ENCODE measurements at regions of chr5 and their contacts with region 1.

Region 1: GRCh38 chr5:140806834-140807775 is at the start of gene PCDHA4:
- DNase-seq: peak; percentile 24 to 74
- ATAC-seq: peak; percentile 97 to 98
- H3K4me3 ChIP-seq: peak within 1 kb of the TSS; percentile 60
- H3K27ac ChIP-seq: peak within 1 kb of the TSS; percentile 66 to 80
- H3K4me1 ChIP-seq: no peaks in the 10 kb centered on the region
- CTCF ChIP-seq: peak; percentile 66
- EP300 ChIP-seq: no peak
- POLR2A ChIP-seq: no peak
- RAD21 ChIP-seq: peak; percentile 67 to 70
- polyA plus RNA-seq, gene PCDHA4: 2.8 and 3.3 TPM in 2 replicates

Region 2: GRCh38 chr5:140795259-140795641 is 11.9 kb before region 1 on chr5:
- CTCF ChIA-PET with region 1: interaction called, 28 read pairs
- POLR2A ChIA-PET with region 1: no interaction called
- DNase-seq: peak; percentile 41 to 51
- ATAC-seq: peak; percentile 85 to 93; a peak in 5 of 6 replicates
- H3K4me3 ChIP-seq: peak overlapping the region; percentile 38
- H3K27ac ChIP-seq: no peak overlapping the region
- H3K4me1 ChIP-seq: no peaks in the 10 kb centered on the region
- CTCF ChIP-seq: no peak
- EP300 ChIP-seq: no peak
- POLR2A ChIP-seq: no peak
- RAD21 ChIP-seq: no peak

Region 3: GRCh38 chr5:140821375-140822280 is 14.5 kb after region 1 on chr5 and contains the start of gene PCDHA5:
- CTCF ChIA-PET with region 1: interaction called, 74 read pairs
- POLR2A ChIA-PET with region 1: no interaction called
- DNase-seq: peak; percentile 69 to 73
- ATAC-seq: peak; percentile 85 to 92
- H3K4me3 ChIP-seq: peak within 1 kb of the TSS; percentile 57
- H3K27ac ChIP-seq: peak within 1 kb of the TSS; percentile 53 to 74
- H3K4me1 ChIP-seq: no peaks in the 10 kb centered on the region
- CTCF ChIP-seq: peak; percentile 63
- EP300 ChIP-seq: no peak
- POLR2A ChIP-seq: no peak
- RAD21 ChIP-seq: peak; percentile 43 to 65; a peak in 4 of 5 replicates
- polyA plus RNA-seq, gene PCDHA5: 0.32 and 0.62 TPM in 2 replicates

Region 4: DNA sequence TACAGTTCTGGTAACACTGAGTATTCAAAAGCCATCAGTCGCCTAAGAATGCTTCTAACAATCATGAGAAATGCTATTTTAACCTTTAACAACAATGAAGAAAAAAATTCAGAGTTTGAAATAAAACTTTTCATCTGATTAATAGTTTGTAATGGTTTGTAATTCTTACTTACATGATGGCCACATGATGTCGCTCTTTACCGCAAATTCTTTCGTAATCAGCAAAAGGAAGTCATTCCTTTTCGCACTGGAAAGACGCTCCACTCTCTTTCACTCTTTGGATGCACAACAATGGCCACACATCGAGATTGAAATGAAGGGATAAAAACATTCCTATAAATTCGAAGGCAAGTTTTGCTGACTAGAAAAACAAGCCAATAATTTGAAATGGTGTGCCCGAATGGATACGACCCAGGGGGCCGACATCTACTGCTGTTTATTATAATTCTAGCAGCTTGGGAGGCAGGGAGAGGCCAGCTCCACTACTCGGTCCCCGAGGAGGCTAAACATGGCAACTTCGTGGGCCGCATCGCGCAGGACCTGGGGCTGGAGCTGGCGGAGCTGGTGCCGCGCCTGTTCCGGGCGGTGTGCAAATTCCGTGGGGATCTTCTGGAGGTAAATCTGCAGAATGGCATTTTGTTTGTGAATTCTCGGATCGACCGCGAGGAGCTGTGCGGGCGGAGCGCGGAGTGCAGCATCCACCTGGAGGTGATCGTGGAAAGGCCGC is 27.1 kb after region 1 on chr5 and contains the start of gene PCDHA7:
- CTCF ChIA-PET with region 1: no interaction called
- POLR2A ChIA-PET with region 1: no interaction called
- DNase-seq: peak in 1 of 2 experiments; percentile 33
- ATAC-seq: no peak
- H3K4me3 ChIP-seq: no peak within 1 kb of the TSS
- H3K27ac ChIP-seq: no peak within 1 kb of the TSS
- H3K4me1 ChIP-seq: no peaks in the 10 kb centered on the region
- CTCF ChIP-seq: peak; percentile 23; the same call in 2 of the 3 replicates
- EP300 ChIP-seq: no peak
- POLR2A ChIP-seq: no peak
- RAD21 ChIP-seq: peak; percentile 23 to 43; a peak in 3 of 5 replicates
- polyA plus RNA-seq, gene PCDHA7: 0.23 and 0.25 TPM in 2 replicates